ENCODE measurements at regions of chr15 and their contacts with region 1.

Region 1: DNA sequence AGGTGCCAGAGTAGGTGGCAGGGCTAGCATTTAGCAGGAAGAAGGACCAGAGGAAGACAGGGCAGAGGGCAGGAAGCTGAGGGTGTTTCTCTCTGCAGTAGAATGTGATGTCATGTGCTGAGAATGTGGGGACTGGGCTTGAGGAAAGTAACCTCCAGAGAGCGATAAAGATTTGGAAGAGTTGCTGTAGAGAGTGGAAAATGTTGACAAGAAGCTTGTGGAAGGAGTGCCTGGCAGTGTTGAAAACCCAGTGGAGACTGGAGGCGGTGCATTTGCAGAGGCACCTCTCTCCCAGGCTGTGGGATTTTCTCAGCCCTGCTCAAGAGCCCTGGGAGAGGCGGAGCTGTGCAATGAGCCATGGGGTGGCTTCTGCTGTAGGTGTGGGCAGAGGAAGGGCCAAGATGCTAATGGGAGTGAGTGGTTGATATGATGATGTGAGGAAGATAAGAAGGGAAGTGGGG is 54.8 kb downstream of the MESD start:
- DNase-seq: no peak
- H3K4me3 ChIP-seq: no peak overlapping the region
- H3K27ac ChIP-seq: no peak overlapping the region
- H3K4me1 ChIP-seq: peaks cover 0 to 2% (median 0%) of the 10 kb centered on the region in 4 experiments; a peak in 1 of 7 replicates
- H3K27me3 ChIP-seq: no peaks in the 10 kb centered on the region
- CTCF ChIP-seq: no peak
- EP300 ChIP-seq: no peak
- POLR2A ChIP-seq: no peak
- RAD21 ChIP-seq: 0 out of 4 replicates have a peak, but pooled peaks of 1 of the 2 experiments have one; percentile 3

Region 2: DNA sequence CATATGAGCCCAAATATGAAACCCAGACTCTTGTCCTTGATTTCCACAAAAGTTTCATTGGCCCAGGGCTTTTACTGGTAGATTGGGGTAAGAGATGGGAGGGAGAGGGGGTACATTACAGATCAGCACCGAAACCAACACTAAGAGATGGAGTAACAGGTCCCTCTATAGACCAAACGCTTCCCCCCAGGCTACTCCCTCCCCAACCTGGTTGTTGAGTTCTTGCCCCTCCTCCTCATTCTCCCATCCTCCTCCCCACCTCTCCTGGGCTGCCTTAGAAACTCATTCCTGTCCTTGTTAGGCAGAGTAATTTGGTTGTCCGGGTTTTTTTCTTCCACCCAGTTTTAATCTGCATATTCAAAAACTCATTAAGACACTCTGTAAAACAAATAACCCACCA is 19.3 kb before region 1 on chr15:
- CTCF ChIA-PET with region 1: interaction called, 10 read pairs
- POLR2A ChIA-PET with region 1: interaction called, 3 read pairs
- DNase-seq: peak; percentile 56 to 58
- H3K4me3 ChIP-seq: no peak overlapping the region
- H3K27ac ChIP-seq: no peak overlapping the region
- H3K4me1 ChIP-seq: peaks cover 0 to 3% (median 3%) of the 10 kb centered on the region in 4 experiments; a peak in 4 of 7 replicates
- H3K27me3 ChIP-seq: peaks cover 0 to 2% (median 0%) of the 10 kb centered on the region in 4 experiments; a peak in 2 of 7 replicates
- CTCF ChIP-seq: peak; percentile 55 to 76 (median 57); a peak in 3 of 4 replicates
- EP300 ChIP-seq: no peak
- POLR2A ChIP-seq: no peak
- RAD21 ChIP-seq: peak; percentile 78 to 80

Region 3: DNA sequence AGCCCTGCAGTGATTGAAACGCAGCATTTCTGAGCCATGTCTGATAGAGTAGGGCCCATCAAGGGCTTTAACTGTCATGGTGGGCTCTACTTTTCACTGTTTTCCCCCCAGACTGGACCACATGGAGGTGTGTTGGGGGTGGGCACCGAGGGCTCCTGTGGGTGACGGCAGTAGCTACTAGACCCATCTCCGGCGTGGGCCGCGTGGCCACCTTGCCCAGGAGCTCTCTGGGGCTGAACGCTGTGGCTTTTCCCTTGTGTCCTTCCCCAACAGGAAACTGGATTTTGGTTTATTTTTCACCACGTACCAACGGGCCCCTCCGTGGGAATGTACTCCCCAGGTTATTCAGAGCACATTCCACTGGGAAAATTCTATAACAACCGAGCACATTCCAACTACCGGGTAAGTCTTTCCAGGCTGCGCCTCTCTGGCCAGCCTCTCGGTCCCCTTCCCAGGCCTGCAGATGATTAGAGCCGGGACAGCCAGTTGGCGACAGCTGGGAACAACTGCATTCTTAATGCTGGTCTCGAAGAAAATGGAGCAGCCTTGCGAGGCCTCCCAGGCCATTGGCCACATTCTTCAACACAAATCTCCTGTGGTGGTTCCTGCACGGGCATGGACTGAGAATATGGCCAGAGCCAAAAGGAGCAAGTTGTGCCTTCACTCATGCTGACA is 12.9 kb before region 1 on chr15:
- CTCF ChIA-PET with region 1: interaction called, 10 read pairs
- POLR2A ChIA-PET with region 1: no interaction called
- DNase-seq: no peak
- H3K4me3 ChIP-seq: no peak overlapping the region
- H3K27ac ChIP-seq: no peak overlapping the region; the same call in 1 of the 2 replicates
- H3K4me1 ChIP-seq: no peaks in the 10 kb centered on the region
- H3K27me3 ChIP-seq: no peaks in the 10 kb centered on the region; a peak in 1 of 7 replicates
- CTCF ChIP-seq: no peak
- EP300 ChIP-seq: no peak
- POLR2A ChIP-seq: no peak
- RAD21 ChIP-seq: no peak

Region 4: GRCh38 chr15:81038975-81039607 is 104.3 kb after region 1 on chr15:
- CTCF ChIA-PET with region 1: no interaction called
- POLR2A ChIA-PET with region 1: no interaction called
- DNase-seq: no peak
- H3K4me3 ChIP-seq: no peak overlapping the region
- H3K27ac ChIP-seq: no peak overlapping the region
- H3K4me1 ChIP-seq: no peaks in the 10 kb centered on the region
- H3K27me3 ChIP-seq: no peaks in the 10 kb centered on the region
- CTCF ChIP-seq: no peak
- EP300 ChIP-seq: no peak
- POLR2A ChIP-seq: no peak
- RAD21 ChIP-seq: no peak